ENCODE measurements at regions of chr3 and their contacts with region 1.

Region 1: DNA sequence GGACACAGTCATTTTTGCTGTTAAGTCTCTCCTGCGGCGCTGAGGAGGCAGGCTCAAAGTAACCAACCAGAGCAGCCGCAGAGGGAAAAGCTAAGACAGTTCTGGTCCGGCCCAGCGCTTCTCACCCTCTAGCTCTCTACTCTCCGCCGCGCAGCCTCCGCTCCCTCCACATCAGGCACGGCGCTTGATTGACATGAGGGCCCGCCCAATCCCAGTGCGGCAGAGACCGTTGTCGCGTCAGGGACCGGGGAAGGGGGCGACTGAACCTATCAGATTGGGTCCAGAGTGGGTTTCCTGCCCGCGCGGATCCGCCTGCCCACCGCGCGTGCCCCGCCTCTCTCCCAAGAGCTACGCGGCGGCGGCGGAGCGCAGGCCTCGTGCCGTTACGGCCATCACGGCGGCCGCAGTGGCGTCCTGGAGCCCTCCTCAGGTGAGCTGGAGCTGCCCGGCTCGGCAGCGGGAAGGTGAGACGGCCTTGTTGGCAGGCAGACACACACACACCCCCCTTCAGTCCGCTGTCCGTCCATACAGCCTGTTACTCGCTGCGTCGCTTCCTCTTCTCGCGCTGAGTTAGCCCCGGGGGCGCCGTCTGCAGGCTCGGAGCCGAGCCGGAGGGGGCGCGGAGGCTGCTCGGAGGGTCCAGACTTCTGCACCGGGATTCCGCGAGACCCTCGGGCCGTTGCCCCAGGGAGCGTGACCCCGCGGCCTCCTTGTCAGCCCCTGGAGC is at the start of gene NCK1:
- DNase-seq: peak; percentile 94
- ATAC-seq: peak; percentile 98
- H3K4me3 Mint-ChIP-seq: peak within 1 kb of the TSS; percentile 97
- H3K27ac Mint-ChIP-seq: peak within 1 kb of the TSS; percentile 97
- H3K4me1 Mint-ChIP-seq: peaks cover 39% of the 10 kb centered on the region
- H3K27me3 Mint-ChIP-seq: no peaks in the 10 kb centered on the region
- total RNA-seq, gene NCK1: 37.2 to 42.2 TPM

Region 2: DNA sequence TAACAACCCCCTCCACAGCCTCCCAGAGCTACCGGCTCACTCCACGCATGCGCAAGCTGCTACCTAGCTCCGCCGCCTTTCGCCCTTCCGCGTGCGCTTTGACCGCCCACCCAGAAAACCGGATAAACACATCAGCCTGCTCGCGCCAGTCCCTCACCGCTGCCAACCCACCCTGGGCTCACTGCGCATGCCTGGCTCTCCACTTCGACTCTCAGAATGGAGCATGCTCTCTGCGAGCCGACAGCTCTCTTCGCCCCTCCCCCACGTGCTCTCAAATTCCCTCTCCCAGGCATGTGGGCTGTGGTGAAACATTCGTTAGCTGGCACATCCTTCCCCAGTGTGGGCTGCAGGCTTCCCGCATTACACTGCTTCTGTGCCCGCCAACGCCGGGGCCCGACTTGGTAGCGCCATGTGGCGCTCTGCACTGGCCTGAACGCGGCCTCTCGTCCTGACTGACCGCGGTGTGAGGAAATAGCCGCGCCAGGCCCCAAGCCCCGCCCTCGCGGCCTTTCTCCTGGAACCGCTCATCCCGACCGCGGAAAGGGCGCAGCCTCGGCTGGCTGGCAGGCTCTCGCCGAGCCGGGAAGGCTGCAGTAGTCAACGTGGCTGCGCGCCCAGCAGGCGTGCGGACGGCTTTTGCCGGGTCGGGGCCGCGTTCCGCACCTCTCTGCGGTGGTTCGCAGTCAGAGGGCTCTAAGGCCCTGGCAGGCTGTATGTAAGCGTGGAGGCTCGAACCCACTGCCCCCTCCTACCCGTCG is 665.5 kb before region 1 on chr3:
- POLR2A ChIA-PET with region 1: interaction called, 30 read pairs
- DNase-seq: peak; percentile 97
- ATAC-seq: peak; percentile 82
- H3K4me3 Mint-ChIP-seq: peak overlapping the region; percentile 92
- H3K27ac Mint-ChIP-seq: peak overlapping the region; percentile 96
- H3K4me1 Mint-ChIP-seq: peaks cover 19% of the 10 kb centered on the region
- H3K27me3 Mint-ChIP-seq: no peaks in the 10 kb centered on the region

Region 3: GRCh38 chr3:136741063-136741462 is 121.0 kb before region 1 on chr3:
- POLR2A ChIA-PET with region 1: no interaction called
- DNase-seq: no peak
- ATAC-seq: no peak
- H3K4me3 Mint-ChIP-seq: no peak overlapping the region
- H3K27ac Mint-ChIP-seq: no peak overlapping the region
- H3K4me1 Mint-ChIP-seq: peaks cover 12% of the 10 kb centered on the region
- H3K27me3 Mint-ChIP-seq: no peaks in the 10 kb centered on the region

Region 4: GRCh38 chr3:136885357-136886213 is 23.5 kb after region 1 on chr3:
- POLR2A ChIA-PET with region 1: interaction called, 17 read pairs
- DNase-seq: no peak
- ATAC-seq: peak; percentile 84
- H3K4me3 Mint-ChIP-seq: peak overlapping the region; percentile 49
- H3K27ac Mint-ChIP-seq: peak overlapping the region; percentile 77
- H3K4me1 Mint-ChIP-seq: peaks cover 37% of the 10 kb centered on the region
- H3K27me3 Mint-ChIP-seq: no peaks in the 10 kb centered on the region